ENCODE measurements at regions of chr13 and their contacts with region 1.

Region 1: GRCh38 chr13:102452831-102453230 is 51.0 kb upstream of the FGF14 start:
- DNase-seq: no peak
- ATAC-seq: no peak
- H3K4me3 ChIP-seq: no peak overlapping the region
- H3K4me1 ChIP-seq: no peaks in the 10 kb centered on the region
- CTCF ChIP-seq: no peak

Region 2: GRCh38 chr13:102141625-102142472 is 311.0 kb before region 1 on chr13:
- intact Hi-C with region 1: loop called in 1 of 2 experiments (anchors 10 kb)
- DNase-seq: no peak
- ATAC-seq: no peak
- H3K4me3 ChIP-seq: no peak overlapping the region
- H3K4me1 ChIP-seq: no peaks in the 10 kb centered on the region
- CTCF ChIP-seq: no peak

Region 3: GRCh38 chr13:102903659-102904407 is 451.0 kb after region 1 on chr13:
- intact Hi-C with region 1: no loop called
- DNase-seq: no peak
- ATAC-seq: no peak
- H3K4me3 ChIP-seq: no peak overlapping the region
- H3K4me1 ChIP-seq: no peaks in the 10 kb centered on the region
- CTCF ChIP-seq: peak; percentile 16